CD4-positive, alpha-beta T cell (primary cell): ENCODE measurements at regions of chr17 and their contacts with region 1.

Region 1: GRCh38 chr17:53626286-53626685 is 196.4 kb upstream of the KIF2B start:
- DNase-seq: no peak
- ATAC-seq: no peak
- H3K4me3 ChIP-seq: no peak overlapping the region
- H3K4me3 Mint-ChIP-seq: no peak overlapping the region
- H3K27ac ChIP-seq: no peak overlapping the region
- H3K27ac Mint-ChIP-seq: no peak overlapping the region
- H3K4me1 ChIP-seq: no peaks in the 10 kb centered on the region
- H3K4me1 Mint-ChIP-seq: no peaks in the 10 kb centered on the region
- H3K27me3 ChIP-seq: no peaks in the 10 kb centered on the region
- H3K27me3 Mint-ChIP-seq: no peaks in the 10 kb centered on the region
- CTCF ChIP-seq: no peak

Region 2: DNA sequence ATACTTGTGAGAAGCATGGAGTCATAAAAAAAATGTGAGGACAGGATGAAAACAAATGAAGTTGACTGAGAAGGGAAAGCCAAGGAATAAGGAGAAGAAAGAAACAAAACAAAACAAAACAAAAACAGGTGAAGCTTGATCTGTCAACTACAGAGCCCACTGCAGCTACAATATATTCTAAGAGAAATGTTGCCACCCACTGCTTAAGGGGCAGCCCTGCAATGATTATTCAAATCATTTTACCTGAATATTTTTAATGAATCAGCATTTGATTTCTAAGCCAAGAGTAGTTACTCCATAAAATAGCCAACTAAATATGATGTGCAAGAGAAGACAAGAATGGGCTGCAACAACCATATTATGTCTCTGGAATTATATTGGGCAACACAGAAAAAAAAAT is 55.6 kb before region 1 on chr17:
- CTCF ChIA-PET with region 1: no interaction called
- POLR2A ChIA-PET with region 1: no interaction called
- intact Hi-C with region 1: loop called in 1 of 2 experiments (anchors 10 kb)
- DNase-seq: no peak
- ATAC-seq: no peak
- H3K4me3 ChIP-seq: no peak overlapping the region
- H3K4me3 Mint-ChIP-seq: no peak overlapping the region
- H3K27ac ChIP-seq: no peak overlapping the region
- H3K27ac Mint-ChIP-seq: no peak overlapping the region
- H3K4me1 ChIP-seq: no peaks in the 10 kb centered on the region
- H3K4me1 Mint-ChIP-seq: no peaks in the 10 kb centered on the region
- H3K27me3 ChIP-seq: no peaks in the 10 kb centered on the region
- H3K27me3 Mint-ChIP-seq: no peaks in the 10 kb centered on the region
- CTCF ChIP-seq: no peak